ENCODE measurements at regions of chr2 and their contacts with region 1.

Region 1: GRCh38 chr2:203484266-203485112 is 50.6 kb downstream of the RAPH1 start:
- DNase-seq: peak; percentile 32 to 72
- H3K4me3 ChIP-seq: no peak overlapping the region
- H3K27ac ChIP-seq: no peak overlapping the region
- H3K4me1 ChIP-seq: peaks cover 0 to 6% (median 0%) of the 10 kb centered on the region in 4 donors
- H3K27me3 ChIP-seq: no peaks in the 10 kb centered on the region
- CTCF ChIP-seq: peak in 5 of 7 experiments; percentile 20 to 58 (median 44)
- EP300 ChIP-seq: no peak
- POLR2A ChIP-seq: no peak

Region 2: GRCh38 chr2:203418271-203418670 is 66.2 kb before region 1 on chr2:
- intact Hi-C with region 1: no loop called
- DNase-seq: no peak
- H3K4me3 ChIP-seq: no peak overlapping the region
- H3K27ac ChIP-seq: no peak overlapping the region
- H3K4me1 ChIP-seq: no peaks in the 10 kb centered on the region
- H3K27me3 ChIP-seq: no peaks in the 10 kb centered on the region
- CTCF ChIP-seq: no peak
- EP300 ChIP-seq: no peak
- POLR2A ChIP-seq: no peak

Region 3: DNA sequence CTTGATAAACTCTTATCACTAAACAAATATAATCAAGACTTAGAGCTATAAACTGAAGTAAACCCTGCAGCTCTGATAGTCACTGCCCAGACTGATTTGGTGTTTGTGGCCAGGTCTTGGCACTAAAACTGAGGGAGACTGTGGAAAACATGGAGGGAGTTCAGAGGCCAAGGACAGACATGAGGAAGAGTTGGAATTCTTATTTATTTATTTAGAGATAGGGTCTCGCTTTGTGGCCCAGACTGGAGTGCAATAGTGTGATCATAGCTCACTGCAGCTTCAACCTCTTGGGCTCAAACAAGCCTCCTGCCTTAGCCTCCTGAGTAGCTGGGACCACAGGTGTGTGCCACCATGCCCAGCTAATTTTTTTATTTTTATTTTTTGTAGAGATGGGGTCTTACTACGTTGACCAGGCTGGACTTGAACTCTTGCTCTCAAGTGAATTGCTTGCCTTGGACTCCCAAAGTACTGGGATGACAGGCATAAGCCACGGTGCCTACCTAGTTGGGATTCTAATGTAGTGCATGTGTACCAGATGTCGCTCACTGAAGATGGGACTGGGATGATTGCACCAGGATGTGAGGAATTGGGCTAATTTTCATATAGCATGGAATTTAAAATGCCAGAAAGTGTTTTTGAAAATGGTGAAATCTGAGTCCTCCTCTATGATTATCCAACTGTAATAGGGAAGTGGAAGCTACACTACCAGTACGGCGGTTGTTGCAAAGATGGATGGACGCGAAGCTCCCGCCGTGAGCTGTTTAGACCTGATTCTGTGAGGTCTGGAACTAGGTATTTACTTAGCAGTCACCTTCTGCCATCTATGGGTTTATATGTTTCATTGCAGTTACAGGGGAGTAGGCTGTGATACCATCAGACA is 330.4 kb after region 1 on chr2:
- intact Hi-C with region 1: loop called (anchors 10 kb)
- DNase-seq: peak; percentile 54 to 89
- H3K4me3 ChIP-seq: no peak overlapping the region
- H3K27ac ChIP-seq: peak overlapping the region in 3 of 5 donors; percentile 12 to 80 (median 61)
- H3K4me1 ChIP-seq: peaks cover 16 to 49% (median 28%) of the 10 kb centered on the region in 4 donors
- H3K27me3 ChIP-seq: no peaks in the 10 kb centered on the region
- CTCF ChIP-seq: peak in 5 of 7 experiments; percentile 44 to 78 (median 70)
- EP300 ChIP-seq: no peak
- POLR2A ChIP-seq: no peak

Measured in stomach (tissue), 19 donors.